AG04450 (cell line): ENCODE measurements at regions of chr14 and their contacts with region 1.

Region 1: DNA sequence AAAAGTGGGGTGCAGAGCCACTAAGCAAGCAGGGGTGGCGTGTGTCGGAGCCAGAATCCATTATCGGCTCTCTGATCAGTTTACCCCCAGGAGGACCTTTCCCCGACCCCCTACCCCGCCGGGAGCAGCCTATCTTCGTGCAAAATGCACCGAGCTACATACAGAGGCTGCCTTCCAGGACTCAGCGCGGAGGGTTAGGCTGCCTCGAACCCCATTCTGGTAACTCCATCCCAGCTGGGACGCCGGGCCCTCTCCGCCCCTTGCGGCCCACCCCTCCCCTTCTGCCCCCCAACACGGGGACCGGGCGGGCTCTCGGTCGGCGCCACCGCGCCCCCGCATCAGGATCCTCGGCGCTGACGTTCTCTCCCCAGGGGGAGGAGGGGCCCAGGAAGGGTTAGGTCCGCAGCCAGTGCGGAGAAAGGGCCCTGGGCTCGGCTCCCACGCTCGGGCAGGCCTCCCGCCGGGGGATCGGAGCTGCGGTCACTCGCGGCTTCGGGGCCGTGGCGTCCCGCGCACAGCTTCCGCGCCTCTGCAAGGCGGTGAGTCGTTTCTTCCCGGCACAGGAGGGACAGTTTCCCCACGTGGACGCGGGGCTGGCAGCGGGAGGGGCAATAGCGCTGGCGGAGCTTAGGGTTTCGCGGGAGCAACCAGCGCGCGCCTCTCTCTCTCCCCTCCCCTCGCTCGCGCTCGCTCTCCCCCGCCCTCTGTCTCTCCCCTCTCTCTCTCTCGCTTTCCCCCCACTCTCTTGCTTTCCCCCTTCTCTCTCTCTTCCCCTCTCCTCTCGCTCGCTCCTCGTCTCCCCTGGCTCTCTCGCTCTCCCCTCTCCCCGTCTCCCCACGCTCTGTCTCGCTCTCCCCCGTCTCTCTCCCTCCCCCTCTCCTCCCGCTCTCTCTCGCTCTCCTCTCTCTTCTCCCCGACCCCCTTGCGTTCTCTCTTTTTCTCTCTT is 12.5 kb upstream of the MAP3K9 start:
- DNase-seq: no peak
- H3K4me3 ChIP-seq: peak overlapping the region; percentile 70
- H3K27ac ChIP-seq: no peak overlapping the region
- H3K27me3 ChIP-seq: no peaks in the 10 kb centered on the region
- CTCF ChIP-seq: no peak

Region 2: GRCh38 chr14:70809543-70810244 is 12.2 kb before region 1 on chr14:
- CTCF ChIA-PET with region 1: interaction called, 13 read pairs
- POLR2A ChIA-PET with region 1: interaction called, 3 read pairs
- DNase-seq: no peak
- H3K4me3 ChIP-seq: peak overlapping the region; percentile 59
- H3K27ac ChIP-seq: no peak overlapping the region
- H3K27me3 ChIP-seq: peaks cover 37% of the 10 kb centered on the region
- CTCF ChIP-seq: no peak

Region 3: DNA sequence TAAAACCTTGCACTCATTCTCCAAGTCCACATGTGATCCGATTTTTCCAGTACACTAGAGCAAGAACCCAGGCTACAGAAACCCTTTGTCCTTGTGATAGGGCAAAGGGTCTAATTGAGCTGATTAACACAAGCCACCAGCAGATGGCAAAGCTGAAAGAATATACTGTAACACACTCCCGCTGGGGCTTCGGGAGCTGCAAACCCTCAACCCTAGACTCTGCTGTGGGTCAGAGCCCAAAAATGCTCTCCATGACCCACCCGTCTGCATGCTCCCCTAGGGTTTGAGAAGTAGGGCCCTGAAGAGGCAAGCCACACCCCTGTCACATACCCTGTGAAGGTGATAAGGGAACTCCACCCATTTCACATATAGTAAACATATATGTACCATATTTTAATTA is 51.8 kb after region 1 on chr14:
- CTCF ChIA-PET with region 1: interaction called, 11 read pairs
- POLR2A ChIA-PET with region 1: no interaction called
- DNase-seq: no peak
- H3K4me3 ChIP-seq: no peak overlapping the region
- H3K27ac ChIP-seq: no peak overlapping the region
- H3K27me3 ChIP-seq: no peaks in the 10 kb centered on the region
- CTCF ChIP-seq: no peak

Region 4: DNA sequence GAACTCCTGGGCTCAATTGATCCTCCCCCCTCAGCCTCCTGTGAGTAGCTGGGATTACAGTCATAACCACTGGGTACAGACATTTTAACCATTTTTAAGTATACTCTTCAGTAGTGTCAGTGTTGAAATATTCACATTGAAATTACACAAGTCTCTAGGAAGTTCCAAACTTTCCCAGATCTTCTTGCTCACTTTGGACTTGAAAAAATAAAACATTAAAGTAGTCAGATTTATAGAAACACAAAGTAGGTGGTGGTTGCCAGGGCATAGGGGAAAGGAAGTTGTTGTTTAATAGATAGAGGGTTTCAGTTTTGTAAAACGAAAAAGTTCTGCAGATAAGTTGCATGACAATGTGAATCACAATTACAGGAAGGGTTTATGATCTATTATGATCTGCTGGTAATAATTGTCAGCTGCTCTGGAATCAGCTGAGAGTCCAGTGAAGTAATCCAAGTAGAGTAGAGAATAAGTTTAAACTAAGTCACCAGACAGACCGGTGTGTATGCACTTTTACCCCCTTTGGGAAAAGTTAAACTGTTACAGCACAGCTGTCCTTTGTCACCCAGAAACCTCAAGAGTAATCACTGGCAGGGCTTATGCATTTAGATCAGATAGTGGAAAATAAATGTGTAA is 112.8 kb after region 1 on chr14:
- CTCF ChIA-PET with region 1: interaction called, 11 read pairs
- POLR2A ChIA-PET with region 1: no interaction called
- DNase-seq: peak; percentile 13
- H3K4me3 ChIP-seq: no peak overlapping the region
- H3K27ac ChIP-seq: peak overlapping the region; percentile 52
- H3K27me3 ChIP-seq: no peaks in the 10 kb centered on the region
- CTCF ChIP-seq: no peak

Region 5: DNA sequence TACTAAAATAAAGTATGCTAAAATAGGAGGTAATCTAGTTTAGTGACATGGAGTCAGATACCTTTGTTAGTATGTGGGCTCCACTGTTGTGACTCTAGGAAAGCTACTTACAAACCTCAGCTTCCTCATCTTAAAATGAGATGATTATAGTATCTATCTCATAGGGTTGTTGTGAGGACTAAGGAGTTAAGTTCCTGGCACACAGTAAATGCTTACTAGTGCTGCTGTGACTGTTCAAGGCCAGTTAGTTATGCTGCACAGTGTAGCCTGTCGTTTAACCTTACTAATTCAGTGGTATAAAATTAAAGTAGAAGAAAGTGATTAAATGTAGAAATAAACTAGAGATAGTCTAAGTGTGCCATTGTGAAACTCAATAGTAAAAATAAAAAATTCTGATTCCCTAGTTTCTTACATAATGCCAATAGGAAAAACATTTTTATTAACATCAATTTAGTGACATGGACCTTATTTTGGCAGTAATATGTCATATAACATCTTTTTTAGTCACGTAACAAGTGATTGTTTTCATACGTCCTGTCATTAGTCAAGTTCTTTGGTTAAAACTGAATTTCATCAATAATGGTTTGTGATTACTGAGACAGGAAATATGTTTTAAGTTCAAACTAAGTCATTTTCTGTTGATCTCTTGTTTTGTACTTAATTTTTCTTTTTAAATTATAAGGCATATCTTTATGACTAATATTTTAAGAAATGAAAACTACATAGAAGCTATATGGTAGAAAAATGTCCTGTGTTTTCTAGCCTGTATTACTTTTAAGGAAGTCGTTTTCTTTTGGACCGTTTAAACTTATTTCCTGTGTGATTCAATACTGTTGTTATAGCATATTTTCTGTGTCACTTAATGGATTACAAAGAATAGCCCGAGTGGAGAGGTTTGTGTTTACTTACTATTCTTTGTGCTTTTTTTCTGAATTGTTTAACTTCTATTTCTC is 159.4 kb after region 1 on chr14:
- CTCF ChIA-PET with region 1: interaction called, 25 read pairs
- POLR2A ChIA-PET with region 1: no interaction called
- DNase-seq: no peak
- H3K4me3 ChIP-seq: no peak overlapping the region
- H3K27ac ChIP-seq: no peak overlapping the region
- H3K27me3 ChIP-seq: no peaks in the 10 kb centered on the region
- CTCF ChIP-seq: no peak